Activated CD8-positive, alpha-beta T cell treated with anti-CD3 and anti-CD28 coated beads, Interleukin-2, amount 10 ng/mL, durations not matched to agents 7 days and 5 days (primary cell): ENCODE measurements at regions of chr14 and their contacts with region 1.

Region 1: GRCh38 chr14:92651106-92651757 is 97.2 kb downstream of the LGMN start:
- DNase-seq: peak; percentile 92
- ATAC-seq: peak; percentile 79
- H3K4me3 Mint-ChIP-seq: peak overlapping the region; percentile 99
- H3K27ac Mint-ChIP-seq: peak overlapping the region; percentile 99
- H3K4me1 Mint-ChIP-seq: peaks cover 89% of the 10 kb centered on the region
- H3K27me3 Mint-ChIP-seq: no peaks in the 10 kb centered on the region

Region 2: DNA sequence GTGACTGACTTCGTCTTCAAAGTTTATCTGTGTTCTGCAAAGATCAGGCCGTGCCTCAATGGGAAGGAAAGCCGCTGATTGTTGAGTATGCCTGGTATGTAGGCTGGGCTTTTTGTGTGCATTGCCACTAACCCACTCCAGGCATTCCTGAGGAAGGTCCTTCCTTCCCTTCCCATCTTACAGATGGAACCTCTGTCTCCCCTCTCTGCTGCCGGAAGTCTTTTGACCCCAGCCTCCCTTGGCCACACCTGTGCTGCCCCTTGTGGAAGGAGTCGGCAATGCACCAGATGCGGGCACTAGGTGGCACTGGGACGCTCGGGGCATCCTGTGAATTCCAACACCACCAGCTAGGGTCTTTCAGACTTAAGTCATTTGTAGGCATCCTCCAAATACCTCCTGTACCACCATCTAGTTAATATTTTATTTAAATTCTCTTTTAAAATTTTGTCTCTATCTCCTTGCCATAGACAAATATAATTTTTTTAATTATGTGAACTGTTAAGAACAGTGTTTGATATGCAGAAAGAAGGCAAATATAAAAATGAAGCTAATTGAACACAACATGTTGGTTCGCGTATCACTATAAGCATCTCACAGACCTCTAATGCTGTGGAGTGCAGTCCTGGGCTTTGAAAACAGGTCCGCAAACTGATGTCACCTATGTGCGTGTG is 38.1 kb before region 1 on chr14:
- CTCF ChIA-PET with region 1: interaction called, 21 read pairs
- POLR2A ChIA-PET with region 1: interaction called, 48 read pairs
- DNase-seq: peak; percentile 59
- ATAC-seq: no peak
- H3K4me3 Mint-ChIP-seq: no peak overlapping the region
- H3K27ac Mint-ChIP-seq: peak overlapping the region; percentile 22
- H3K4me1 Mint-ChIP-seq: peaks cover 74% of the 10 kb centered on the region
- H3K27me3 Mint-ChIP-seq: no peaks in the 10 kb centered on the region

Region 3: DNA sequence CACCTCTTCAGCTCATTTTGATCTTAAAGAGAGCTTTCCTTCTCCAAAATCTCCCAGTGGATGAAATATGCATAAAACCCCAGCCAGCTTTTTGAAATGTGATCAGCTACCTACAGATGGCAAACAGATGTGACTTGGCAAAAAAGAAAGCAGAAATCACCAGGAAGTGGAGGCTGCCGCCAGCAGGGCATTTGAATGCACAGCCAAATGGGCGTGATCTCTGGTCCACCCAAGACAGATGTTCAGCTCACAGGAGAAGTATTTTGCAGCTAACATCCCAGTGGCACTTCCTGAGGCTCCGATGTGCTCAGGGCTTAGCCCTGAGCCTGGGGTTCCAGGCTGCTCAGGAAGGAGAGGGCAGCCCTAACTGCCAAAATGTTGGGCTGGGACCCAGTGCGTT is 18.9 kb after region 1 on chr14:
- CTCF ChIA-PET with region 1: interaction called, 15 read pairs
- POLR2A ChIA-PET with region 1: interaction called, 8 read pairs
- DNase-seq: no peak
- ATAC-seq: peak; percentile 5
- H3K4me3 Mint-ChIP-seq: no peak overlapping the region
- H3K27ac Mint-ChIP-seq: peak overlapping the region; percentile 45
- H3K4me1 Mint-ChIP-seq: peaks cover 69% of the 10 kb centered on the region
- H3K27me3 Mint-ChIP-seq: no peaks in the 10 kb centered on the region

Region 4: GRCh38 chr14:92724516-92725340 is 73.5 kb after region 1 on chr14:
- CTCF ChIA-PET with region 1: no interaction called
- POLR2A ChIA-PET with region 1: no interaction called
- DNase-seq: no peak
- ATAC-seq: no peak
- H3K4me3 Mint-ChIP-seq: no peak overlapping the region
- H3K27ac Mint-ChIP-seq: no peak overlapping the region
- H3K4me1 Mint-ChIP-seq: peaks cover 13% of the 10 kb centered on the region
- H3K27me3 Mint-ChIP-seq: peaks cover 6% of the 10 kb centered on the region